ENCODE measurements at regions of chr11 and their contacts with region 1.

Region 1: GRCh38 chr11:61679893-61680621 is at the start of gene DAGLA:
- DNase-seq: peak in 6 of 7 donors; percentile 58 to 78 (median 68)
- H3K4me3 ChIP-seq: peak within 1 kb of the TSS in 2 of 4 donors; percentile 34 to 60
- H3K27ac ChIP-seq: peak within 1 kb of the TSS in 1 of 5 donors; percentile 37
- H3K4me1 ChIP-seq: peaks cover 0 to 9% of the 10 kb centered on the region in 2 donors
- H3K27me3 ChIP-seq: peaks cover 6% of the 10 kb centered on the region
- CTCF ChIP-seq: peak; percentile 58 to 99 (median 82)
- POLR2A ChIP-seq: peak in 1 of 2 donors; percentile 29
- total RNA-seq, gene DAGLA: 0.44 to 4.2 (median 2.5) TPM

Region 2: DNA sequence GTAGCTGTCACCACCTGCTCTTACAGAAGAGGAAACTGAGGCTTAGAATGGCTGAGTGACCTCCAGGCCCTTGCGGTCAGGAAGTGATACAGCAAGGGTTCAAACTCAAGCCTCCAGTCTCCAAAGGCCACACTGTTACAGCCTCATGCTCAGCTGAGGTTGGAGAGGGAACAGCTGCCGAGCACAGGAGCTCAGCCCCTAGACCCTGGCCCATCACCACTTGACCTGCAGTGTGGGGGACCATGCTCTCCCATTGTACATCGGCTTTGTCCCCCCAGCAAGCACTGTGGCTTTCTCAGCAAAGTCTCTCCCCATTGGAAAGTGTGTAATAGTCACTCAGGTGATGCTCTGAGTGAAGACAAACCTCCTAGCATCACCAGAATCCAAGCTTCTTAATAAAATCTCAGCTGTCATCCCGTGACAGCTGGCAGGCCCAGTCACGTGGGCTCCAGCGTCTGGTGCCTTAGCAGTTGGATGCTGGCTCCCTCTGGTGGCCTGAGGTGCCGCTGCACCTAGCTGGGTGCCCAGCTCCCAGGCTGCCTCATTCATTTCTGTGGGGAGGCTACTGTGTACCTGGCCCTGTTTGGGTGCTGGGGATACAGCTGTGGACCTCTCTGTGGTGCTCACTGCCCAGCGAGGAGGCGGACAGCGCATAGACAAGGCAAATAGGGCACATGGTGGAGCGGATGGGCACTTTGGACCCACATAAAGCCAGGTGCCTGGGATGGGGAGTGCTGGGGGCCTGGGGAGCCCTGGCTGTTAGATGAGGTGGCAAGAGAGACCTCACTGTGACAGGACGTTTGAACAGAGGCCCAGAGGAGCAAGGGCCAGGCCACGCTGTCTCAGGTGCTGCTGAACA is 53.3 kb after region 1 on chr11:
- intact Hi-C with region 1: loop called (anchors 2 kb)
- DNase-seq: peak; percentile 79 to 96 (median 88)
- H3K4me3 ChIP-seq: no peak overlapping the region
- H3K27ac ChIP-seq: peak overlapping the region in 1 of 5 donors; percentile 81
- H3K4me1 ChIP-seq: peaks cover 0 to 5% of the 10 kb centered on the region in 2 donors
- H3K27me3 ChIP-seq: no peaks in the 10 kb centered on the region
- CTCF ChIP-seq: peak; percentile 97 to 100 (median 99)
- POLR2A ChIP-seq: no peak

Measured in adrenal gland (tissue), 19 donors.